ENCODE measurements at regions of chr19 and their contacts with region 1.

Region 1: DNA sequence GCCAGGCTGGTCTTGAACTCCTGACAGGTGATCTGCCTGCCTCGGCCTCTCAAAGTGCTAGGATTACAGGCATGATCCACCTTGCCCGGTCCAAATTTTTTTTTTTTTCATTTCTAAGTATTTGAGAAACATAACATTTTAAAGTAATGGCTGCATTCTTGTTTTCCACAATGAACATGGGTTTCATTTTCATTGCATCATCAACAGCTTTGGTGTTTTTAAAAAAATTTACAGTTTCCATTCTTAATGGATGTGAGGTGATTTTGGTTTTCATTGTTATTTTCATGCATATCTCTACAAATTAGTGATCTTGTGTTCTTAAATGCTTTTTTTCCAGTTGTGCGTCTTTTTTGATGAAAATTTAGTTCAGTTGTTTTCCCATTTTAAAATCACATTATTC is 27.5 kb downstream of the ZNF429 start:
- DNase-seq: no peak

Region 2: DNA sequence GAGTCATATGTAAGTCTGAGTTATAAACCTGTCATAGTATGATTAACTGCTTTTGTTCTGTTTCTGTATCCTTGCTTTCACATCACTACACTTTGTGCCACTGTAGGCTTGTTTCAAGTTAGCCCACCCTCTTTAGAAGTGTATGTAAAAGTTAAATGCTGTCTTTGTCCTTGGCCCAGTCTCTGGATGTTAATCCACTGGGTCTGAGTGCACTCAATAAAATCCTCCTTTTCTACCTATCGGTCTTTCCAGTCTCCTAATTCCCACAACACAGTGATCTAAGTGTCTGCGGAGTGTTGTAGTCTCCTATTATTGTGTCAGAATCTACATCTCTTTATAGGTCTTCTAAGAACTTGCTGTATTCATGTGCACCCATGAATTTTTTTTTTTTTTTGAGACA is 13.4 kb before region 1 on chr19:
- intact Hi-C with region 1: loop called (anchors 2 kb)
- DNase-seq: no peak

Measured in head of caudate nucleus (tissue), 42 donors.